Ascending aorta (tissue), 2 donors: ENCODE measurements at regions of chr1 and their contacts with region 1.

Region 1: GRCh38 chr1:209692745-209693504 is 11.7 kb upstream of the HSD11B1 start:
- DNase-seq: peak in 1 of 2 donors; percentile 72
- H3K4me3 ChIP-seq: no peak overlapping the region
- H3K27ac ChIP-seq: no peak overlapping the region
- H3K4me1 ChIP-seq: no peaks in the 10 kb centered on the region
- H3K27me3 ChIP-seq: no peaks in the 10 kb centered on the region
- CTCF ChIP-seq: peak; percentile 72 to 91 (median 73)

Region 2: GRCh38 chr1:209569455-209570207 is 123.3 kb before region 1 on chr1:
- intact Hi-C with region 1: loop called (anchors 2 kb)
- DNase-seq: peak in 1 of 2 donors; percentile 78
- H3K4me3 ChIP-seq: peak overlapping the region in 1 of 2 donors; percentile 27
- H3K27ac ChIP-seq: no peak overlapping the region
- H3K4me1 ChIP-seq: no peaks in the 10 kb centered on the region
- H3K27me3 ChIP-seq: no peaks in the 10 kb centered on the region
- CTCF ChIP-seq: peak; percentile 30 to 84 (median 76)

Region 3: DNA sequence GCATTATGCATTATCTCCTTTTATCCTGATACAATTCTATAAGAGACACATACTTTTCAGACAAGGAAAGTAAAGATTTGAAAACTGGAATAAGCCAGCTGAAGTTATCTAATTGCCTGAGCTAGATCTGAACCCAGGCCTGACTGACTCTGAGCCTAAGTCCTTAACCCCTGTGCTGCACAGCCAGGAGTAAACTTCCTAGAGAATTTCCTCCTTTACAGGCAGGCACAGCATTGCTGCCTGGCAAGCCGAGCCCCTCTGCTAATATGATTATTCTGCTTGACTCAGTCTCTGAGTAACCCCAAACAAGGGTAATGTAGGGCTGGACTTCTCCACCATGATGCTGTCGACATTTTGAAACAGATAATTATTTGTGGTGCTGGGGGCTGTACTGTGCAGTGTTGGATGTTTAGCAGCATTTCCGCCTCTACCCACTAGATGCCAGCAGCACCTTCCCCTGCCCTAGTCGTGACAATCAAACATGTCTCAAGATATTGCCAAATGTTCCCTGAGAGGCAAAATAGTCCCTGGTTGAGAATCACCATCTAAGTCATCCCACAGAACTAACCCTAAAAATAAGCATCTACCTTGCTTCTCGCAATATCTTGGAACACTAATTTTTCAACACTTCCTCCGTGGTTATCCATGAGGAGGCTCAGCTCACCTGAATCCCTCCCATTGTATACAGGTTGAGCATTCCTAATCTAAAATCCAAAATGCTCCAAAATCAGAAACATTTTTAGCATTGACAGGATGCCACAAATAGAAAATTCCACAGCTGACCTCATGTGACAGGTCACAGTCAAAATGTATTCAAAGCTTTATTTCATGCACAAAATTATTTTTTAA is 90.9 kb before region 1 on chr1:
- intact Hi-C with region 1: loop called (anchors 1 kb)
- DNase-seq: no peak
- H3K4me3 ChIP-seq: no peak overlapping the region
- H3K27ac ChIP-seq: no peak overlapping the region
- H3K4me1 ChIP-seq: no peaks in the 10 kb centered on the region
- H3K27me3 ChIP-seq: no peaks in the 10 kb centered on the region
- CTCF ChIP-seq: peak; percentile 26 to 54 (median 34)